ENCODE measurements at regions of chr3 and their contacts with region 1.

Region 1: GRCh38 chr3:189148081-189148507 is 23.7 kb upstream of the TPRG1 start:
- DNase-seq: no peak
- ATAC-seq: peak; percentile 69

Region 2: GRCh38 chr3:188954590-188955208 is 193.4 kb before region 1 on chr3:
- intact Hi-C with region 1: loop called (anchors 5 kb)
- DNase-seq: peak; percentile 82
- ATAC-seq: peak; percentile 82

Region 3: DNA sequence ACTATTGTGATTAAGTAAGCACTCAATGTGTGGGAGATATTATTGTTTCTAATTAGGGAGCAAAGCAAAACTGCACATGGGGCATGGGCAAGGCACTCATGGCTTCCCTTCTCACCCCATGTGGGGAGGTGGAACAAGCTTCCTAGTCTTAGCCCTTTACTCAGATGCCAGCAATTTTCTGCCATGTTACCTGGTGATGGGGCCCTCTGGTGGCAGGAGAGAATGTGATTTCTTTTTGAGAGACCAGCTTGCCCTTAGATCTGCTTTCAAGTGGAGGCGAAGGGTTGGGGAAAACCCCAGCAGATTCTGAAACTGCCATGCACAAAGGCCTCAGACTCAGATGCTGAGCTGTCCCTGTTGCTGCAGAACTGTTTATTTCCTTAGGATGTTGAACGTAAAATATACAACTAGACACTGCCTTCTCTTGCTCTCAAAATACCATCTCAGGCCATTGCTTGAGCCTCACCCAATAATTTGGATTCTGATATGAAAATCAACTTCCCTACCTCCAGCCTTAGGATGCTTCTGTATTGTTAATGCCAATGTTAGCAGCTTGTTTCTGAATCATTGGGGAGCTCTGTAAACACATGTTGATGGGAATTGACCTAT is 106.5 kb before region 1 on chr3:
- intact Hi-C with region 1: loop called (anchors 5 kb)
- DNase-seq: no peak
- ATAC-seq: no peak

Region 4: GRCh38 chr3:189430166-189430947 is 282.3 kb after region 1 on chr3:
- intact Hi-C with region 1: no loop called
- DNase-seq: no peak
- ATAC-seq: no peak

Measured in Right ventricle myocardium inferior (tissue), 1 donor.